ENCODE measurements at regions of chr1 and their contacts with region 1.

Region 1: GRCh38 chr1:27102707-27103491 is 52.0 kb downstream of the SLC9A1 start:
- DNase-seq: peak; percentile 66 to 90 (median 82)
- H3K4me3 ChIP-seq: no peak overlapping the region
- H3K27ac ChIP-seq: no peak overlapping the region
- H3K4me1 ChIP-seq: peaks cover 4% of the 10 kb centered on the region
- H3K27me3 ChIP-seq: no peaks in the 10 kb centered on the region
- CTCF ChIP-seq: peak; percentile 84 to 96 (median 93)
- EP300 ChIP-seq: no peak
- POLR2A ChIP-seq: no peak

Region 2: GRCh38 chr1:26692793-26693490 is 410.0 kb before region 1 on chr1:
- intact Hi-C with region 1: no loop called
- DNase-seq: peak; percentile 88 to 93 (median 91)
- H3K4me3 ChIP-seq: peak overlapping the region; percentile 56
- H3K27ac ChIP-seq: peak overlapping the region; percentile 72 to 93
- H3K4me1 ChIP-seq: peaks cover 8% of the 10 kb centered on the region
- H3K27me3 ChIP-seq: no peaks in the 10 kb centered on the region
- CTCF ChIP-seq: no peak
- EP300 ChIP-seq: no peak
- POLR2A ChIP-seq: peak; percentile 68

Region 3: DNA sequence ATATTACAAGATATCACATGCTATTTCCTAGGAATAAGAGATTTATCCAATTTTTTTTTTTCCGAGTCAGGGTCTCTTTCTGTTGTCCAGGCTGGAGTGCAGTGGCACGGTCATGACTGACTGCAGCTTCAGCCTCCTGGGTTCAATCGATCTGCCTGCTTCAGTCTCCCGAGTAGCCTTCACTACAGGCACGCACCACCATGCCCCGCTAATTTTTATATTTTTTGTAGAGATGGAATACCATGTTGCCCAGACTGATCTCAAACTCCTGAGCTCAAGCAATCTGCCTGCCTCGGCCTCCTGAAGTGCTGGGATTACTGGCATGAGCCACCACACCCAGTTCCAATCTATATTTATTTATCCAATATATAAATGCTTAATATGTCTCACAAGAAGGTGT is 113.6 kb after region 1 on chr1:
- intact Hi-C with region 1: no loop called
- DNase-seq: no peak
- H3K4me3 ChIP-seq: no peak overlapping the region
- H3K27ac ChIP-seq: no peak overlapping the region
- H3K4me1 ChIP-seq: no peaks in the 10 kb centered on the region
- H3K27me3 ChIP-seq: no peaks in the 10 kb centered on the region
- CTCF ChIP-seq: no peak
- EP300 ChIP-seq: no peak
- POLR2A ChIP-seq: no peak

Region 4: GRCh38 chr1:27267153-27267552 is 164.3 kb after region 1 on chr1:
- intact Hi-C with region 1: no loop called
- DNase-seq: no peak
- H3K4me3 ChIP-seq: no peak overlapping the region
- H3K27ac ChIP-seq: no peak overlapping the region
- H3K4me1 ChIP-seq: no peaks in the 10 kb centered on the region
- H3K27me3 ChIP-seq: no peaks in the 10 kb centered on the region
- CTCF ChIP-seq: no peak
- EP300 ChIP-seq: no peak
- POLR2A ChIP-seq: no peak

Region 5: GRCh38 chr1:27284425-27285273 is 181.8 kb after region 1 on chr1:
- intact Hi-C with region 1: loop called (anchors 2 to 5 kb)
- DNase-seq: peak; percentile 77 to 88 (median 84)
- H3K4me3 ChIP-seq: no peak overlapping the region
- H3K27ac ChIP-seq: no peak overlapping the region
- H3K4me1 ChIP-seq: no peaks in the 10 kb centered on the region
- H3K27me3 ChIP-seq: no peaks in the 10 kb centered on the region
- CTCF ChIP-seq: peak; percentile 62 to 71 (median 63)
- EP300 ChIP-seq: no peak
- POLR2A ChIP-seq: no peak

Region 6: GRCh38 chr1:27365372-27366112 is 262.6 kb after region 1 on chr1:
- intact Hi-C with region 1: no loop called
- DNase-seq: peak; percentile 89 to 93 (median 91)
- H3K4me3 ChIP-seq: peak overlapping the region; percentile 89
- H3K27ac ChIP-seq: peak overlapping the region; percentile 86 to 91
- H3K4me1 ChIP-seq: peaks cover 7% of the 10 kb centered on the region
- H3K27me3 ChIP-seq: no peaks in the 10 kb centered on the region
- CTCF ChIP-seq: no peak
- EP300 ChIP-seq: no peak
- POLR2A ChIP-seq: peak; percentile 71

Measured in ovary (tissue), 10 donors.